Activated naive CD4-positive, alpha-beta T cell treated with anti-CD3 and anti-CD28 coated beads for 36 hours (primary cell): ENCODE measurements at regions of chr14 and their contacts with region 1.

Region 1: DNA sequence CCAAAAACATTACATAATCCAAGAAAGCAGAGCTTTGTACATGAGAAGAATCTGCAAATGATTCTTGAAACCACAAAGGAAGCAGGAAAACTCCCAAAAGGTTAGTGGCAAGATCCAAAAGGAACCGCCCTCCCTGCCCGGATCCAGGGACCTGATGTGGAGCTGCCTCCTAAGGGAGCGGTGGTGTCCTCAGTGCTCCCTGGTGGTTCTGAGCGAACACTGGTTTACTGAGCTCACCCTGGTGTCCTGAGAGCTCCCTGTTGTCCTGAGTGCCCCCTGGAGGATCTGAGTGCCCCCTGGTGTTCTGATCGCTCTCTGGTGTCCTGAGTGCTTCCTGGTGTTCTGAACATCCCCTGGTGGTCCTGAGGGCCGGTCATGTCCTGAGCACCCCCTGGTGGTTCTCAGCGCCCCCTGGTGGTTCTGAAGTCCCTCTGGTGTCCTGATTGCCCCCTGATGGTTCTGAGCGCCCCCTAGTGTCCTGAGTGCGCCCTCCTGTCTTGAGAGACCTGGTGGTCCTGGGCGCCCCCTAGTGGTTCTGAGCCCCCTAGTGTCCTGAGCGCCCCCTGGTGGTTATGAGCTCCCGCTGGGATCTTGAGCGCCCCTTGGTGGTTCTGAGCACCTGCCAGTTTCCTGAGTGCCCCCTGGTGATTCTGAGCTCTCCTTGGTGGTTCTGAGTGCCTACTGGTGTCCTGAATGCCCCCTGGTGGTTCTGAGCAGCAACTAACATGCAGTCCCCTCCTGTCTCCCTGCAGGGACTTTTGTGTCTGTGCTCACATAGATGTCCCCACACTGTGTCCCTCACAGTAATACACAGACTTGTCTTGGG is 891.1 kb downstream of the TMEM121 start:
- DNase-seq: peak; percentile 97
- H3K4me3 Mint-ChIP-seq: no peak overlapping the region
- H3K27ac Mint-ChIP-seq: no peak overlapping the region
- H3K4me1 Mint-ChIP-seq: peaks cover 15% of the 10 kb centered on the region
- H3K27me3 Mint-ChIP-seq: peaks cover 4% of the 10 kb centered on the region

Region 2: DNA sequence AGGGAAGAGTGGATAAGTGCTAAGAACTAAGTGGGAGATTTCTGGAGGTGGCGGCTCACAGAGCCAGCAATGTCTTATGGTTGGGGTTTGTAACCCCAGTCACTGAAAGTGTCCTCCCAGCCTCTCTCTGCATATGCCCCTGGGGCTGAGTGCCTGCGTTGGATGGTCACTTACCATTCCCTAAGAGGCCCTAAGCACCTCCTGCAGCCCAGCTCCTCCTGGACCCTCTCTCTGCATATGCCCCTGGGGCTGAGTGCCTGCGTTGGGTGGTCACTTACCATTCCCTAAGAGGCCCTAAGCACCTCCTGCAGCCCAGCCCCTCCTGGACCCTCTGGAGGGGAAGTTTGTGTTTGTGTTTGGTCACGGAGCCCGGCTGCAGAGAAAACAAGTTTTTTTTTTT is 465.2 kb before region 1 on chr14:
- CTCF ChIA-PET with region 1: no interaction called
- intact Hi-C with region 1: no loop called
- DNase-seq: no peak
- H3K4me3 Mint-ChIP-seq: no peak overlapping the region
- H3K27ac Mint-ChIP-seq: no peak overlapping the region
- H3K4me1 Mint-ChIP-seq: peaks cover 2% of the 10 kb centered on the region
- H3K27me3 Mint-ChIP-seq: no peaks in the 10 kb centered on the region

Region 3: DNA sequence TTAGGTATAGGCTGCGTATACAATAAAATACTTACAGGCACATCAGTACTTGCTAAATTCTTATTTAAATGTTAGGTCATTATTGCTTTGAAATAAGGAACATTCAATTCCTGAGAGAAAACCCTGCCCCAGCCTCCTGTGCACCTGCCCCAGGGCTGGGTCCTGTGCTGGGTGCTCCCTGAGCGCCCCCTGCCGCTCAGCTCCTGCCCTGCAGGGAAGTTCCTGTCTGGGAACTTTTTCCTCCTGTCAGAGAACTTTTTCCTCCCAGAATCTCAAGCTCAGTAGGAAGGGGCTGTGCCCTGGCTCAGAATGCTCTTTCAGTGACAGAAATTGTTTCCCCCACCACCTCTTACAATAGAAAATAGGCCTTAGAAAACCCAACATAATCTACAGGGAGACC is 139.9 kb before region 1 on chr14:
- CTCF ChIA-PET with region 1: interaction called, 18 read pairs
- intact Hi-C with region 1: no loop called
- DNase-seq: peak; percentile 50
- H3K4me3 Mint-ChIP-seq: no peak overlapping the region
- H3K27ac Mint-ChIP-seq: no peak overlapping the region
- H3K4me1 Mint-ChIP-seq: peaks cover 17% of the 10 kb centered on the region
- H3K27me3 Mint-ChIP-seq: peaks cover 25% of the 10 kb centered on the region

Region 4: DNA sequence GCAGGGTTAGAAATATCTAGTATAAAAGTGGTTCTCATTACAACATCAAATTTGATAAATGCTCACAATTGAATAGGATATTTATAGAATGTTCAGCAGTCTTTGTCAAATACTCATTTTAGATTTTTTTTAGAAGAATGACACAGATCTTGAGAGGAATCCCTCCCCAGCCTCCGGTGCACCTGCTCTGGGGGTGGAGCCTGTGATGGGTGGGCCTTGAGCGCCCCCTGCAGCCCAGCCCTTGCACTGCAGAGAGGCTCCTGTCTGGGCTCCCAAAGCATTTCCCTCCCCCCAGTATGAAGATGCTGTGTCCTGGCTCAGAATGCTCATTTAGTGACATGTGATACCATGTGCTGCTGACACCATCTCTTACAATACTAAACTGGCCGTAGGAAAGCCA is 98.7 kb before region 1 on chr14:
- CTCF ChIA-PET with region 1: interaction called, 10 read pairs
- intact Hi-C with region 1: no loop called
- DNase-seq: peak; percentile 81
- H3K4me3 Mint-ChIP-seq: no peak overlapping the region
- H3K27ac Mint-ChIP-seq: no peak overlapping the region
- H3K4me1 Mint-ChIP-seq: no peaks in the 10 kb centered on the region
- H3K27me3 Mint-ChIP-seq: peaks cover 3% of the 10 kb centered on the region

Region 5: DNA sequence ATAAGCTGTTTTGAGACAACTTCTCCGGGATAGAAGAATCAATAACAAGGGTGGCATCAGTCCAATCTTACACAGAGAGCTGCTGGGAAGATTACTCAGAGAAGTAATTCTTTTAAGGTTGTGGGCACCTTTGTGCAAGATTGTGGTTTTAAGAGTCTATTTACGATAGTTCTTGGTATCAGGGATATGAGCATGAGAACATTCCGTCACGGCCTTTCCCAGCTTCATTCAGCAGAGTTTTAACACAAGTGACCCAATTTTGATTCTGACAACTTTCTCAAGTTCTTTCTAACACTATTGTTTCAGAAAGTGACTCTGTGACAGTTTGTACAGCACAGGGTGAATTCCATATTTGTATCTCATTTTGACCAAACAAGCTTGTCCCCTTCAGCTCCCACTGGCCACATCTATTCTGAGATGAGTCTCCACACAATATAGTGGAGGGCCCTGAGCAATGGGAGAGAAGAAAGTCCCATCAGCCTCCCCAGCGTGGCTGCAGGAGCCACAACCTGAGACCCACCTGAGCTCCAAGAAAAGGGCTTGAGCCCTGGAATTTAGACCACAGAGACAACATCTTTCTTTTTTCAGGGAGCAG is 21.9 kb before region 1 on chr14:
- CTCF ChIA-PET with region 1: interaction called, 51 read pairs
- intact Hi-C with region 1: loop called (anchors 2 kb)
- DNase-seq: peak; percentile 74
- H3K4me3 Mint-ChIP-seq: peak overlapping the region; percentile 63
- H3K27ac Mint-ChIP-seq: peak overlapping the region; percentile 92
- H3K4me1 Mint-ChIP-seq: peaks cover 39% of the 10 kb centered on the region
- H3K27me3 Mint-ChIP-seq: peaks cover 8% of the 10 kb centered on the region

Region 6: GRCh38 chr14:106455026-106455425 is 37.6 kb after region 1 on chr14:
- CTCF ChIA-PET with region 1: interaction called, 14 read pairs
- intact Hi-C with region 1: no loop called
- DNase-seq: no peak
- H3K4me3 Mint-ChIP-seq: no peak overlapping the region
- H3K27ac Mint-ChIP-seq: no peak overlapping the region
- H3K4me1 Mint-ChIP-seq: no peaks in the 10 kb centered on the region
- H3K27me3 Mint-ChIP-seq: no peaks in the 10 kb centered on the region

Region 7: GRCh38 chr14:106530423-106531107 is 113.1 kb after region 1 on chr14:
- CTCF ChIA-PET with region 1: interaction called, 35 read pairs
- intact Hi-C with region 1: no loop called
- DNase-seq: peak; percentile 53
- H3K4me3 Mint-ChIP-seq: no peak overlapping the region
- H3K27ac Mint-ChIP-seq: no peak overlapping the region
- H3K4me1 Mint-ChIP-seq: peaks cover 3% of the 10 kb centered on the region
- H3K27me3 Mint-ChIP-seq: peaks cover 16% of the 10 kb centered on the region